ENCODE measurements at regions of chr4 and their contacts with region 1.

Region 1: DNA sequence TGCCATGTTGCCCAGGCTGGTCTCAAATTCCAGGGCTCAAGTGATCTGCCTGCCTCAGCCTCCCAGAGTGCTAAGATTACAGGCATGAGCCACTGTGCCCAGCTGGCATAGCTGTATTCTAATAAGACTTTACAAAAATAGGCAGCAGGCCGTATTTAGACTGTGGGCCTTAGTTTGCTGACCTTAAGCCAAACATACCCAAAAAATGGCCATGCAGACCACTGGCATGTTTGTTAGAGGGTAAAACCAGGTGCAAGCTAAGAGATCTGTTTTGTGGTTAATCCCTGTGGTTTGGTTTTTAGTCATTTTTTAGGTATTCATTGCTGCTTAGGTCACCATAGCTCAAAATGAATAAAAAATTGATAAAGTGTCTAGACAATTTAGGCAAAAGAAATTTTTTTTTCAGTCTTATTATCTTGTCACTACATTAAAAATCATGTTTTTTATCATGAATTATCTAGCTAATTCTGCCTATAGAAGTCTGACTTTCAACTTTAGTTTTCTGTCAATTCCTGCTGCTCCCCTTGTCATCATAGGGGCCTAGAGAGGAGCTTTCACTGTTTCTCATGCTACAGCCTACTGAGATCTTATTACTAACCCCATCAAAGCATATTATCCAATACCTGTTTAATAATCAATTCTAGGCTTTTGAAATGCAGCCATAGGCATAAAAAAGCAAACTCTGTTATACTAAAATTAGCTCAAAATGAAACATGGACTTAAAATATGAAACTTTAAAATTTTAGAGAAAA is 7.5 kb upstream of the SPINK2 start:
- DNase-seq: no peak
- H3K4me3 Mint-ChIP-seq: no peak overlapping the region
- H3K27ac Mint-ChIP-seq: peak overlapping the region; percentile 43
- H3K4me1 Mint-ChIP-seq: peaks cover 18% of the 10 kb centered on the region
- H3K27me3 Mint-ChIP-seq: peaks cover 11% of the 10 kb centered on the region

Region 2: DNA sequence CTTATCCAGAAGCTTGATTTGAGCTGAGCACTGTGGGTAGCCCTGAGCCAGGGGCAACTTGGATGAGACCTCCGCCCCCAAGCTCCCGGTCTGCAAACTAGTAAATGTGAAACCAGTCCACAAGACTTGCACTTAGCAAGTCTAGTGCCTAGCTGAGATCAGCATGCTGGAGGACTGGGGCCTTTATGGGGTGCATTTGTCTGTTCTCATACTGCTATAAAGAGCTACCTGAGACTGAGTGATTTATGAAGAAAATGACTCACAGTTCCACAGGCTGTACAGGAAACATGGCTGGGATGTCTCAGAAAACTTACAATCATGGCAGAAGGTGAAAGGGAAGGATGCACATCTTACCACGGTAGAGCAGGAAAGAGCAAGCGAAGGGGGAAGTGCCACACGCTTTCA is 105.8 kb before region 1 on chr4:
- intact Hi-C with region 1: loop called (anchors 2 kb)
- DNase-seq: peak; percentile 64
- H3K4me3 Mint-ChIP-seq: peak overlapping the region; percentile 9
- H3K27ac Mint-ChIP-seq: peak overlapping the region; percentile 78
- H3K4me1 Mint-ChIP-seq: peaks cover 16% of the 10 kb centered on the region
- H3K27me3 Mint-ChIP-seq: no peaks in the 10 kb centered on the region